Activated CD4-positive, alpha-beta T cell treated with anti-CD3 and anti-CD28 coated beads, Interleukin-2, amount 10 ng/mL, durations not matched to agents 7 days and 5 days (primary cell): ENCODE measurements at regions of chr16 and their contacts with region 1.

Region 1: DNA sequence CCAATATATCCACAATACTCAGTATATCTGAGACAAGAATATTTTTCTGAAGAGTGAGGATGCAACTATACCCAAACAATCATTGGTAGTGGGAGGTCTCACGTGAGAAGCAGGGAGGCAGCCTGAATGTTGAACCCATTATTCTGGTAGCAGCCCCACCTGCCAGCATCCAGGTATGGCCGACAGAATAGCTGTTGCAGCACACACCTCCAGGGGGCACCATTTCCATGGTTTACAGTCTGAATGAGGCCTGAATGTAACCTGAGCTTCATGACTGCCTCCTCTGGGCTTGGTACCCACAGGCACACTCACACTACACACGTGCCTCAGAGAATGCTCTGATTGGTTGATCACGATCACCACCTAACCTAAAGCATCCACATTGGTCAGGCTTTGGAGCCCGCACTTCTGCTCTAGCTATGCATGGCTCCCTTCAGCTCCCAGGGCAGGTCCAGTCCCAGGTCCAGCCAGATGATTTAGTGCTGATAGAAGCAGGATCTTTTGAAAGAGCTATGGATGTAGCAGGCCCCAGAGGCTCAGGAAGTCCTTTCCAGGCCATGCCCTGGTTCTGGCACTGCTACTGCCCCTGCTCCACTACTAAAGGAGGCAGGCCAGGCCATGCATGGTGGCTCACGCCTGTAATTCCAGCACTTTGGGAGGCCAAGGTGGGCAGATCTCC is 11.0 kb upstream of the CBFB start:
- DNase-seq: peak; percentile 94
- H3K4me3 Mint-ChIP-seq: no peak overlapping the region
- H3K27ac Mint-ChIP-seq: peak overlapping the region; percentile 46
- H3K4me1 Mint-ChIP-seq: peaks cover 42% of the 10 kb centered on the region
- H3K27me3 Mint-ChIP-seq: no peaks in the 10 kb centered on the region

Region 2: DNA sequence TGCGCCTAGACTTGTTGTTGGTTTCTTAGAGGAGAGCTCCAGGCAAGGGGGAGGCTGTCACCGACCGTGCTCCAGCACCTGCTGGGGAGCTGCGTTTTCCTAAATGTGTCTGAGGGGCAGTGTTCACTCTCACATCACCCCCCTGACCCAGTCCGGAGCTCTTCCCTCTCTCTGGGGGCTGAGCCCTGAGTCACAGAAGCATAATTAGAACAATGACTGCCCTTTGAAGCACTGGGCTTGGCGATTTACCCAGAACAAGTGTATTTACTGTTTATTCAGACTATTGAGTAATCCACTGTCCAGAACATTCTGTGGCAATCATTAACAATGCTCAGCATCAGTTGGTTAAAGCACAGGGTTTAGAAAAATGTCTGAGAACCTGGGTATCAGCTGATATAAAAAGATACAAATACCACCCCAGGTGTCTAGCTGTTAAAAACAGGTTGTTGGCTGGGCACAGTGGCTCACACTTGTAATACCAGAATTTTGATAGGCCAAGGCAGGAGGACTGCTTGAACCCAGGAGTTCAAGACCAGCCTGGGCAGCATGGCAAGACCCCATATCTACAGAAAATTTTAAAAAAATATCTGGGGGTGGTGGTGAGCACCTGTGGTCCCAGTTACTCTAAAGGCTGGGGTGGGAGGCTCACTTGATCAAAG is 21.5 kb before region 1 on chr16:
- CTCF ChIA-PET with region 1: interaction called, 12 read pairs
- POLR2A ChIA-PET with region 1: no interaction called
- DNase-seq: no peak
- H3K4me3 Mint-ChIP-seq: no peak overlapping the region
- H3K27ac Mint-ChIP-seq: no peak overlapping the region
- H3K4me1 Mint-ChIP-seq: peaks cover 24% of the 10 kb centered on the region
- H3K27me3 Mint-ChIP-seq: no peaks in the 10 kb centered on the region

Region 3: GRCh38 chr16:67028555-67029248 is 10.8 kb after region 1 on chr16 and contains the start of gene CBFB:
- CTCF ChIA-PET with region 1: interaction called, 54 read pairs
- POLR2A ChIA-PET with region 1: interaction called, 5 read pairs
- DNase-seq: peak; percentile 94
- H3K4me3 Mint-ChIP-seq: peak within 1 kb of the TSS; percentile 92
- H3K27ac Mint-ChIP-seq: peak within 1 kb of the TSS; percentile 94
- H3K4me1 Mint-ChIP-seq: peaks cover 58% of the 10 kb centered on the region
- H3K27me3 Mint-ChIP-seq: no peaks in the 10 kb centered on the region
- total RNA-seq, gene CBFB: 218 to 222 TPM

Region 4: DNA sequence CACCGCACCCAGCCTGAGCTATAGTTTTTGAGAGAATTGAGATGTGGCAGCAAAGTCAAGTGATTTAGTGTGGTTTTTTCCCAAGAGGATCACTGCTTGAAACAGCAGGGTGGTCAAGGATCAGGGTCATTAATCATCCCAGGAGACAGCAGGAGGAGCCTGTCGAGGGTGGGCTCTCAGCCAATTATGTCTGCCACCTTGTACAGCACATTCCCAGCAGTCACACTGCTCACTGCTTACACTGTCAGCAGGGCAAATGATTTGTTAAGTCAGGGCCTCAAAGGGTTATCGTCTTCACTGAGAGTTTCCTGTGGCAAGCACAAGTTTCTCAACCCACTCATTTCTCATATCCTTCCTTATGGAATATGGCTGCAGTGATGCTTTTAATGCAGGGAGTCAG is 119.7 kb after region 1 on chr16:
- CTCF ChIA-PET with region 1: interaction called, 12 read pairs
- POLR2A ChIA-PET with region 1: no interaction called
- DNase-seq: no peak
- H3K4me3 Mint-ChIP-seq: no peak overlapping the region
- H3K27ac Mint-ChIP-seq: no peak overlapping the region
- H3K4me1 Mint-ChIP-seq: no peaks in the 10 kb centered on the region
- H3K27me3 Mint-ChIP-seq: no peaks in the 10 kb centered on the region

Region 5: GRCh38 chr16:67183627-67184328 is 165.8 kb after region 1 on chr16 and contains the start of gene MATCAP1:
- CTCF ChIA-PET with region 1: interaction called, 15 read pairs
- POLR2A ChIA-PET with region 1: no interaction called
- DNase-seq: peak; percentile 98
- H3K4me3 Mint-ChIP-seq: peak within 1 kb of the TSS; percentile 79
- H3K27ac Mint-ChIP-seq: no peak within 1 kb of the TSS
- H3K4me1 Mint-ChIP-seq: peaks cover 25% of the 10 kb centered on the region
- H3K27me3 Mint-ChIP-seq: peaks cover 7% of the 10 kb centered on the region
- total RNA-seq, gene MATCAP1: 47.5 to 51.4 TPM

Region 6: GRCh38 chr16:67372664-67373063 is 354.7 kb after region 1 on chr16:
- CTCF ChIA-PET with region 1: no interaction called
- POLR2A ChIA-PET with region 1: no interaction called
- DNase-seq: no peak
- H3K4me3 Mint-ChIP-seq: no peak overlapping the region
- H3K27ac Mint-ChIP-seq: no peak overlapping the region
- H3K4me1 Mint-ChIP-seq: no peaks in the 10 kb centered on the region
- H3K27me3 Mint-ChIP-seq: peaks cover 5% of the 10 kb centered on the region